ENCODE measurements at regions of chr2 and their contacts with region 1.

Region 1: GRCh38 chr2:70047118-70048045 is 39.9 kb upstream of the PCBP1 start:
- DNase-seq: no peak
- ATAC-seq: no peak
- H3K4me3 ChIP-seq: no peak overlapping the region
- H3K27ac ChIP-seq: no peak overlapping the region
- H3K4me1 ChIP-seq: no peaks in the 10 kb centered on the region
- H3K27me3 ChIP-seq: no peaks in the 10 kb centered on the region
- CTCF ChIP-seq: no peak

Region 2: GRCh38 chr2:70070541-70071268 is 23.3 kb after region 1 on chr2:
- CTCF ChIA-PET with region 1: interaction called, 11 read pairs
- POLR2A ChIA-PET with region 1: no interaction called
- intact Hi-C with region 1: no loop called
- DNase-seq: peak; percentile 83
- ATAC-seq: peak; percentile 99
- H3K4me3 ChIP-seq: no peak overlapping the region
- H3K27ac ChIP-seq: no peak overlapping the region
- H3K4me1 ChIP-seq: no peaks in the 10 kb centered on the region
- H3K27me3 ChIP-seq: no peaks in the 10 kb centered on the region
- CTCF ChIP-seq: peak; percentile 88

Measured in PC-3 (cell line).